Natural killer cell (primary cell): ENCODE measurements at regions of chr17 and their contacts with region 1.

Region 1: GRCh38 chr17:76278952-76279741 is 14.0 kb downstream of the UBALD2 start:
- DNase-seq: peak; percentile 87 to 90
- ATAC-seq: peak; percentile 80 to 95 (median 80)
- H3K4me3 ChIP-seq: no peak overlapping the region
- H3K4me3 Mint-ChIP-seq: no peak overlapping the region
- H3K27ac ChIP-seq: no peak overlapping the region
- H3K27ac Mint-ChIP-seq: no peak overlapping the region
- H3K4me1 ChIP-seq: peaks cover 12% of the 10 kb centered on the region
- H3K4me1 Mint-ChIP-seq: peaks cover 0 to 4% of the 10 kb centered on the region in 2 donors
- H3K27me3 ChIP-seq: no peaks in the 10 kb centered on the region
- H3K27me3 Mint-ChIP-seq: no peaks in the 10 kb centered on the region
- CTCF ChIP-seq: peak; percentile 96

Region 2: GRCh38 chr17:76121932-76122430 is 157.2 kb before region 1 on chr17:
- intact Hi-C with region 1: loop called (anchors 1 kb)
- DNase-seq: peak in 1 of 2 donors; percentile 38
- ATAC-seq: peak; percentile 28 to 36 (median 31)
- H3K4me3 ChIP-seq: peak overlapping the region; percentile 49
- H3K4me3 Mint-ChIP-seq: peak overlapping the region; percentile 58
- H3K27ac ChIP-seq: no peak overlapping the region
- H3K27ac Mint-ChIP-seq: peak overlapping the region in 1 of 2 donors; percentile 82
- H3K4me1 ChIP-seq: peaks cover 14% of the 10 kb centered on the region
- H3K4me1 Mint-ChIP-seq: peaks cover 0 to 19% of the 10 kb centered on the region in 2 donors
- H3K27me3 ChIP-seq: no peaks in the 10 kb centered on the region
- H3K27me3 Mint-ChIP-seq: no peaks in the 10 kb centered on the region
- CTCF ChIP-seq: no peak

Region 3: DNA sequence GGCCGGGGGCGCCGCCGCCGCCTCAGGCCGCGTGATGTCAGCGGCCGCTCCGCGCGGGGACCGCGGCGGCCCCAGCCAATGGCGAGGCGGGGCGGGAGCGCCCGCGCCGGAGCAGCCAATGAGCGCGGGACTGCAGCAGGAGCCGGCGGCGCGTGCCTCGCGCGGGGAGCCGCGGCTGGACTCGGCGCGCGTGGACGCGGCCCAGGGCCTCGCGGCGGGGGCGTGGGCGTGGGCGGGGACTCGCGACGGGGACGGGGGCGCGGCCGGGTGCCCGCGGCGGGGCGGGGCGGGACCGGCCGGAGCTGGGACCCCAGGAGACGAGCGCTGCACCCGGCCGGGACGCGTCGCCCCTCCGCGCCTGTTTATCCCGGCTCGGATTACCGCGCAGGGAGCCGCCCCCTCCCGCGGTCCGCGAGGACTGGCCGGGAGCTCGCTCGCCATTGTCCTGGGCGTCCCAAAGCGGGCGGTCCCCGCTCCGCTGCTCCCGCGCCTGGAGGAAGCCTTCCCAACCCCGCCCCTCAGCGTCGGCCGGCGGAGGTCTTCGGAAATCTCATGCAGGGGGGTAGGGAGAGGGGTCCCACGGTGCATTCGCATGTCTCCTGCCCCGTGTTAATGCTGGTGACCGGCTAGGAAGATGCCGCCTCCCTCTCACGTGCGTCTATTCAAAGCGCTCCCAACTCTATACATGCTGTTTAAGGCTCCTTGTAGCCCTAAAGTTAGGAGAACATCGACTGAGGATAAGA is 38.5 kb before region 1 on chr17 and contains the start of gene RNF157:
- intact Hi-C with region 1: loop called (anchors 5 kb)
- DNase-seq: peak; percentile 65 to 86
- ATAC-seq: peak; percentile 92 to 95 (median 94)
- H3K4me3 ChIP-seq: peak within 1 kb of the TSS; percentile 44
- H3K4me3 Mint-ChIP-seq: peak within 1 kb of the TSS; percentile 93
- H3K27ac ChIP-seq: no peak within 1 kb of the TSS
- H3K27ac Mint-ChIP-seq: peak within 1 kb of the TSS; percentile 59 to 81
- H3K4me1 ChIP-seq: peaks cover 20% of the 10 kb centered on the region
- H3K4me1 Mint-ChIP-seq: peaks cover 8 to 16% of the 10 kb centered on the region in 2 donors
- H3K27me3 ChIP-seq: peaks cover 20% of the 10 kb centered on the region
- H3K27me3 Mint-ChIP-seq: peaks cover 0 to 12% of the 10 kb centered on the region in 2 donors
- CTCF ChIP-seq: no peak
- total RNA-seq, gene RNF157: 4.9 to 9.1 (median 8.5) TPM

Region 4: DNA sequence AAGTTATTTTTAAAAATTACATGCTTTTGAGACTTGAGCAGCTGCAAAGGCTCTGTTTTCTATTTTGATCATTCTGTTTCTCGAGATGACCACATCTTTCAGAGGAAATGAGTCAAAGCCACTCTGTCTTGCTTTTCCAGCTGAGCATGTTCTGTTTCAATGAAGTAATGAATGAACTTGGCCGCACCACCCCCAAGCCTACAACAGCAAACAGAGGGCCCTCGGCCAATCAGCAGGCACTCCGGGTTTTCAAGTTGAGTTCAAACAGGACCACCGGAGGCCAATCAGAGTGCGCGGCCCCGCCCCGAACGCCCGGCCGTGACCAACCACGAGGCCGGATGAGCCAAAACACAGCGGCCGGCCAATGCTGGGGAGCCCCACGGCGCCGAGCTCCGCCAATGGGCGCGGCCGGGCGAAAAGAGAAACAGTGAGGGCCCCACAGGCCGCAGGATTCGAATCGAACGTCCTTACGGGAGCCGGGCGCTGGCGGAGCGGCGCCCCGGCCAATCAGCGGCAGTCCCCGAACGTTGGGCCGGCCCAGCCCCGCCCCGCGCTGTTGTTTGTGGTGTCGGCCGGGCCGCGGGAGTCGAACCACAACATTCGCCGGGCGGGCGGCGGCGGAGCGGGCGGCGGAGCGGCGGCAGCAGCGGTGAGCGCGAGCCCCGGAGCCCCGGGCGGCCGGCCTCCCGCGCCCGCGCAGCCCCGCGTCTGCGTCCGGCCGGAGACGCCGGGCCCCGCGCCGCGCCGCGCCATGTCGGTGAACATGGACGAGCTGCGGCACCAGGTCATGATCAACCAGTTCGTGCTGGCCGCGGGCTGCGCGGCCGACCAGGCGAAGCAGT is 14.2 kb before region 1 on chr17 and contains the start of gene UBALD2:
- intact Hi-C with region 1: no loop called
- DNase-seq: peak; percentile 98 to 99
- ATAC-seq: peak; percentile 72 to 92 (median 82)
- H3K4me3 ChIP-seq: peak within 1 kb of the TSS; percentile 61
- H3K4me3 Mint-ChIP-seq: peak within 1 kb of the TSS; percentile 94
- H3K27ac ChIP-seq: peak within 1 kb of the TSS; percentile 77
- H3K27ac Mint-ChIP-seq: peak within 1 kb of the TSS; percentile 99
- H3K4me1 ChIP-seq: peaks cover 74% of the 10 kb centered on the region
- H3K4me1 Mint-ChIP-seq: peaks cover 60% of the 10 kb centered on the region in 2 donors
- H3K27me3 ChIP-seq: no peaks in the 10 kb centered on the region
- H3K27me3 Mint-ChIP-seq: no peaks in the 10 kb centered on the region
- CTCF ChIP-seq: no peak
- total RNA-seq, gene UBALD2: 171 to 287 (median 189) TPM